Activated naive CD4-positive, alpha-beta T cell treated with anti-CD3 and anti-CD28 coated beads, Interleukin-2, amount 10 ng/mL, durations not matched to agents 7 days and 5 days (primary cell): ENCODE measurements at regions of chr11 and their contacts with region 1.

Region 1: GRCh38 chr11:62905927-62906531 is 15.1 kb downstream of the CHRM1 start:
- DNase-seq: peak; percentile 85
- H3K4me3 Mint-ChIP-seq: no peak overlapping the region
- H3K27ac Mint-ChIP-seq: no peak overlapping the region
- H3K4me1 Mint-ChIP-seq: peaks cover 10% of the 10 kb centered on the region
- H3K27me3 Mint-ChIP-seq: peaks cover 72% of the 10 kb centered on the region

Region 2: GRCh38 chr11:62792202-62792575 is 113.8 kb before region 1 on chr11:
- CTCF ChIA-PET with region 1: no interaction called
- DNase-seq: peak; percentile 48
- H3K4me3 Mint-ChIP-seq: peak overlapping the region; percentile 89
- H3K27ac Mint-ChIP-seq: peak overlapping the region; percentile 98
- H3K4me1 Mint-ChIP-seq: peaks cover 47% of the 10 kb centered on the region
- H3K27me3 Mint-ChIP-seq: no peaks in the 10 kb centered on the region

Region 3: GRCh38 chr11:62880803-62881578 is 25.0 kb before region 1 on chr11 and contains the start of gene SLC3A2:
- CTCF ChIA-PET with region 1: interaction called, 12 read pairs
- DNase-seq: peak; percentile 92
- H3K4me3 Mint-ChIP-seq: peak within 1 kb of the TSS; percentile 97
- H3K27ac Mint-ChIP-seq: peak within 1 kb of the TSS; percentile 100
- H3K4me1 Mint-ChIP-seq: peaks cover 52% of the 10 kb centered on the region
- H3K27me3 Mint-ChIP-seq: peaks cover 4% of the 10 kb centered on the region

Region 4: DNA sequence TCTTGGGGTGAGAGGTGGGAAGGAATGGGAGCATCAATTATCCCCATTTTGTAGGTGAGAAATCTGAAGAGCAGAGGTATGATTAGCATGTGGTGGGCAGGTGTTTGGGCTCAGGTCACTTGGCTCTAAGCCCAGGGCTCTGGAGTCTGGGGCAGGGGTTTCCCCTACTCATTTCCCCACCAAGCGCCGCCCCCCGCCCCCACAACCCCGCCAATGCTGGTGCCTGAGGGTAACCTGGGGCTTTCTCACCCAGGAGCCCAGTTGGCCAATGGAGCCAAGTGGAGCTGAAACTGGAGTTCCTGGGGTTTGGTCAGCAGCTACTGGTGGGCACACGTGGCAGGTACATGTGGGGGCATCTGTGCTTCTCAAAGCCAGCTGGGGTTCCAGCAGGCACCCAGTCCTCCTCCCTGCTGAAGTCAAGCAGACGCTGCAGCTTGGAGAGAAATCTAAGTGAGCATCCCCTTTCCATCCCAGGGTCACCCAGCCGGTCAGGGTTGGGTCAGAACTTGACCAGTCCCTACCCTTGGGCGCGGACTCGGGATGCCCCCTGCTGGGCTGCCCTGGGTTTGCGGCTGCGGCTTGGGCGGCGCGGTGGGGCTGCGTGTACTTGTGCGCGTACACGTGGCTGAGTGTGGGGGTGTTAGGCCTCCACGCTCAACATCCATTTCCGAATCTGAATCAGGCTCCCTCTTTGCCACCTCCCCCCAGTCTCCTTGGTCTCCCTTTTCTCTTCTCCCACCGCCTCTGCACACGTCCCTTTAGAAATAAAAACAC is 16.8 kb after region 1 on chr11:
- CTCF ChIA-PET with region 1: interaction called, 23 read pairs
- DNase-seq: peak; percentile 29
- H3K4me3 Mint-ChIP-seq: no peak overlapping the region
- H3K27ac Mint-ChIP-seq: no peak overlapping the region
- H3K4me1 Mint-ChIP-seq: peaks cover 23% of the 10 kb centered on the region
- H3K27me3 Mint-ChIP-seq: peaks cover 100% of the 10 kb centered on the region

Region 5: DNA sequence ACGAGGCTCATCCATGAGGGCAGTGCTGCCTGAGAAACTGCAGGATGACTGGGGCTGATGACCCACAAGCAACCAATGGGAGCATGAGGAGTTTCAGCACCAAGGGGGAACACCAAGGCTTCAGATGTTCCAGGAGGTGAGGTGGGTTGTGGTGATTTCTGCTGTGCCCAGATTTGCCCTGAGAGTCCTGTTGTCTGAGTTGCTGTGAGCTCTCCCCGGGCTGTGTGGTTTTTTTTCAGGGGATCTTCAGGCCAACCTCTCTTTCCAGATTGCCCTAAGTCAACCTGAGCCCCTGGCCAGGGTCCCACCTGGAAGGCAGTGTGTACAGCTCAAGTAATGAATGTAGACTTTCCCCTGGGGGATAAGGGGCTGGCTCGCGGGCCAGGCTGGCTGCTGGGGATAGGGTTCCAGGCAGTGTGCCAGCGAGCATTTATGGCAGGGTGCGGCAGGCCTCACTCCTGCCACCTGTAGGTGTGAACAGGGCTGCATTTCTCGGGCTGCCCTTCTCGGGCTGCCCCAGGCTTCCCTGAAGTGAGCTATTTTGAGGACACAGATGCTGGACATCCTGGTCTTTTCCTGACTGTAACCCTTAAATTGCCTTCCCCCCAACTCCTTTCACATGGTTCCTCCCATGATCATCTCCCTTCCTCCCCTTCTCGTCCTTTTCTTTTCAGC is 69.0 kb after region 1 on chr11:
- CTCF ChIA-PET with region 1: interaction called, 35 read pairs
- DNase-seq: peak; percentile 26
- H3K4me3 Mint-ChIP-seq: no peak overlapping the region
- H3K27ac Mint-ChIP-seq: no peak overlapping the region
- H3K4me1 Mint-ChIP-seq: no peaks in the 10 kb centered on the region
- H3K27me3 Mint-ChIP-seq: peaks cover 36% of the 10 kb centered on the region

Region 6: GRCh38 chr11:63023841-63024648 is 118.0 kb after region 1 on chr11:
- CTCF ChIA-PET with region 1: interaction called, 231 read pairs
- DNase-seq: peak; percentile 88
- H3K4me3 Mint-ChIP-seq: no peak overlapping the region
- H3K27ac Mint-ChIP-seq: peak overlapping the region; percentile 0
- H3K4me1 Mint-ChIP-seq: no peaks in the 10 kb centered on the region
- H3K27me3 Mint-ChIP-seq: peaks cover 27% of the 10 kb centered on the region

Region 7: GRCh38 chr11:63212742-63213141 is 306.7 kb after region 1 on chr11:
- CTCF ChIA-PET with region 1: interaction called, 10 read pairs
- DNase-seq: peak; percentile 35
- H3K4me3 Mint-ChIP-seq: no peak overlapping the region
- H3K27ac Mint-ChIP-seq: no peak overlapping the region
- H3K4me1 Mint-ChIP-seq: no peaks in the 10 kb centered on the region
- H3K27me3 Mint-ChIP-seq: peaks cover 21% of the 10 kb centered on the region